K562 (cell line): ENCODE measurements at regions of chr2 and their contacts with region 1.

Region 1: DNA sequence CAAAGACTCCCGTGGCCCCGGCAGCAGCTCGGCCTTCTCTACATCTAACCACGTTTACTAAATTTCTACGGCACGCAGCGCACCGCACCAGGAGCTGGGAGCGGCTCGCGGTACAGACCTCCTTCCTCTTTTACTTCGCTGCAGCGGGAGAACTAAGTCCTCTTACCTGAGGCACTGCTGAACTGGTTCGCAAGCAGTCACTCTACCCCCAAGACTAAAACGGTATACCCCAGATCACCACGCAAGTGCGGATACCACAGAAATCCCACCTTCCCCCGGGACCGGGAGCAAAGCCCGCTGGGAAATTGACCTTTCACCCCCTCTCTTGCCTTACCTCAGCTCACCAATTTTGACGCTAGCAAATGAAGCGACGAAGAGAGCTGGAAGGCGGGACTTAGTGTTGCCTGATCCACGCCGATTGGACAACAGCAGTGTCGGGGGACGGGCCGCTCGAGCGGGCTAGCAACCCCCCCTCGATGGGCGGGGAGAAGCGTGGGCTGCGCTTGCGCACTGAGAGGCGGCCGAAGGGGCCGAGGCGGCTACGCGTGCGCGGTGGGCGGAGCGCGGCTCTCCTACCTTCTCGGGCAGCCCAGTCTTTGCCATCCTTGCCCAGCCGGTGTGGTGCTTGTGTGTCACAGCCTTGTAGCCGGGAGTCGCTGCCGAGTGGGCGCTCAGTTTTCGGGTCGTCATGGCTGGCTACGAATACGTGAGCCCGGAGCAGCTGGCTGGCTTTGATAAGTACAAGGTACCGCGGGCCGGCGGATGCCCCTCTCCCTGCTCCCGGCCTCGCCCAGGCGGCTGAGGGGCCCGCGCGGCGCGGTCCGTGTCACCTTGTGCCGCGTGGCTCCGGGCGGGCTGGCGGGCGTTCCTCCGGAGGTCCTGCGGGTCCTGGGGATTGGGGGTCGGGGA is at the start of gene SELENOI:
- DNase-seq: peak; percentile 98 to 99 (median 99)
- ATAC-seq: peak; percentile 89
- H3K4me3 ChIP-seq: peak within 1 kb of the TSS; percentile 86
- H3K27ac ChIP-seq: peak within 1 kb of the TSS; percentile 97
- H3K4me1 ChIP-seq: peaks cover 18 to 19% of the 10 kb centered on the region in 2 experiments
- H3K27me3 ChIP-seq: no peaks in the 10 kb centered on the region
- CTCF ChIP-seq: no peak
- EP300 ChIP-seq: peak; percentile 35; the same call in 1 of the 2 replicates
- POLR2A ChIP-seq: peak; percentile 99
- RAD21 ChIP-seq: no peak; a peak in 1 of 4 replicates
- polyA plus RNA-seq, gene SELENOI: 9.6 to 10.6 TPM

Region 2: DNA sequence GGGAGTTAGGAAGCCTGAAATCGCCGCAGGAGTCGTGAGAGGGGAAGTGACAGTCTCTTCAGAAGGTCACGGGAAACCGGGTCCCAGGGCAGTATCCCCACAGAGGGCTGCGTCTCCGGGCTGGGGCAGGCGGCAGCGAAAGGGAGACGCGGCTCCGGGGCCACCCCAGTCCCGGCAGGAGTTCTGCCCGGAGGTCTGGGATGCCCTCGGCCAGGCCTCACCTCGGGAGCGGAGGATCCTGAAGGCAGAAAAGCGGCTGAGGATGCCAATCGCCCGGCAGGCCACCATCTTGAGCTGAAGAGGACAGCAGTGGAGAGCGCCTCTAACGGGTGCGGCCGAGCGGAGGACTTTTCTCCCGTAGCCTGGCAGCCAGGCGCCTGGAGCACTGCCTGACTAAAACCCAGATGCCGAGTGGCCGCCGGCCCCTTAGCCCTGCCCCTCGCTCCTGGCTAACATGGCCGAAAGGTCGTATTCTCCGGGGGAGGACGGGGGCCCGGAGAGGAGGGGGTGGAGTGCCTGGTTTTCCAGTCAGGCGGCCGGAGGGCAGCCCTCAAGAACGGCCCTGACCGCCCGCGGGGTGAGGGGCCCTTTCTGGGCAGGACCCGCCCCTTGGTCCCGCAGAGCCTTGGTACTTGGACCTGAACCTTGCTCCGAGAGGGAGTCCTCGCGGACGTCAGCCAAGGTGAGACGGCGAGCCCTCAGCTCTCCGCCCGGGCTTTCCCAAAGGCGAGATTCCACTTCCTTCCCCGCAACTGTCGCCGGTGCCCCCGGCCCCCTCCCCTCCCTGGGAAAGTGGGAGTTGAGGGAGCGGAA is 101.3 kb before region 1 on chr2 and contains the starts of genes HADHA and HADHB:
- CTCF ChIA-PET with region 1: no interaction called
- POLR2A ChIA-PET with region 1: interaction called, 5 read pairs
- in situ Hi-C with region 1: no loop called
- intact Hi-C with region 1: loop called (anchors 5 kb)
- DNase-seq: peak; percentile 90 to 93 (median 91)
- ATAC-seq: peak; percentile 85
- H3K4me3 ChIP-seq: peak within 1 kb of the TSS; percentile 82
- H3K27ac ChIP-seq: peak within 1 kb of the TSS; percentile 95
- H3K4me1 ChIP-seq: peaks cover 9 to 16% of the 10 kb centered on the region in 2 experiments; a peak in 3 of 5 replicates
- H3K27me3 ChIP-seq: no peaks in the 10 kb centered on the region
- CTCF ChIP-seq: peak; percentile 13 to 18 (median 14); a peak in 2 of 6 replicates
- EP300 ChIP-seq: peak; percentile 47
- POLR2A ChIP-seq: peak; percentile 91
- RAD21 ChIP-seq: 0 out of 4 replicates have a peak, but pooled peaks of 1 of the 2 experiments have one; percentile 4
- polyA plus RNA-seq, gene HADHA: 152 to 326 TPM
- polyA plus RNA-seq, gene HADHB: 198 to 199 TPM

Region 3: GRCh38 chr2:26335231-26335630 is 10.6 kb before region 1 on chr2:
- CTCF ChIA-PET with region 1: no interaction called
- POLR2A ChIA-PET with region 1: interaction called, 11 read pairs
- in situ Hi-C with region 1: no loop called
- intact Hi-C with region 1: no loop called
- DNase-seq: no peak
- ATAC-seq: no peak
- H3K4me3 ChIP-seq: no peak overlapping the region
- H3K27ac ChIP-seq: no peak overlapping the region
- H3K4me1 ChIP-seq: peaks cover 2 to 23% of the 10 kb centered on the region in 2 experiments; a peak in 4 of 5 replicates
- H3K27me3 ChIP-seq: no peaks in the 10 kb centered on the region
- CTCF ChIP-seq: no peak
- EP300 ChIP-seq: no peak
- POLR2A ChIP-seq: no peak
- RAD21 ChIP-seq: no peak

Region 4: DNA sequence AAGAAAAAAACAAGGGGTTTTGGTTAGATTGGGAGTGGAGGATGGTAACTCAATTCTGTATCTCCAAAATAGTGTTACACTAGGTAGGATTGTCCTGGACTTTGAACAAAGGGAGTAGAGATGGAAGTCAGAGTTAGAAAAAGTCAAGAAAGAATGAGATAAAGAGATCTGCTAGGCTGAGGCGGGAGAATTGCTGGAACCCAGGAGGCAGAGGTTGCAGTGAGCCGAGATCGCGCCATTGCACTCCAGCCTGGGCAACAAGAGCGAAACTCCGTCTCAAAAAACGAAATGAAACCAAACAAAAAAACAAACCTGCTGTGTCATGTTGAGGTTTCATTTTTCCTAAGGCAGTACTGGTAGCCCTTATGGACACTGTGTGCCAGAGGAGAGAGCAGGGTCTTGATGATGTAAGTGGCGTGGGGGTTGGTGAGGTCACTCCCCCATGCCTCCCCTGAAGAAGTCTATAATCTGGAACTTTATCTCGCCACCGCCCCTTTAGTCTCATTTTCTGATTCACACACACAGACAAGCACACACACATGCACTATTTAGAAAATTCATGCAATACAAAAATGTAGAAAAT is 66.4 kb after region 1 on chr2:
- CTCF ChIA-PET with region 1: no interaction called
- POLR2A ChIA-PET with region 1: no interaction called
- in situ Hi-C with region 1: no loop called
- intact Hi-C with region 1: loop called (anchors 5 kb)
- DNase-seq: peak; percentile 79 to 92 (median 85)
- ATAC-seq: peak; percentile 94
- H3K4me3 ChIP-seq: peak overlapping the region; percentile 30
- H3K27ac ChIP-seq: peak overlapping the region; percentile 95
- H3K4me1 ChIP-seq: peaks cover 7 to 18% of the 10 kb centered on the region in 2 experiments; a peak in 4 of 5 replicates
- H3K27me3 ChIP-seq: no peaks in the 10 kb centered on the region
- CTCF ChIP-seq: peak in 1 of 3 experiments; percentile 6; a peak in 1 of 6 replicates
- EP300 ChIP-seq: peak; percentile 83
- POLR2A ChIP-seq: peak; percentile 87
- RAD21 ChIP-seq: no peak; a peak in 1 of 4 replicates

Region 5: DNA sequence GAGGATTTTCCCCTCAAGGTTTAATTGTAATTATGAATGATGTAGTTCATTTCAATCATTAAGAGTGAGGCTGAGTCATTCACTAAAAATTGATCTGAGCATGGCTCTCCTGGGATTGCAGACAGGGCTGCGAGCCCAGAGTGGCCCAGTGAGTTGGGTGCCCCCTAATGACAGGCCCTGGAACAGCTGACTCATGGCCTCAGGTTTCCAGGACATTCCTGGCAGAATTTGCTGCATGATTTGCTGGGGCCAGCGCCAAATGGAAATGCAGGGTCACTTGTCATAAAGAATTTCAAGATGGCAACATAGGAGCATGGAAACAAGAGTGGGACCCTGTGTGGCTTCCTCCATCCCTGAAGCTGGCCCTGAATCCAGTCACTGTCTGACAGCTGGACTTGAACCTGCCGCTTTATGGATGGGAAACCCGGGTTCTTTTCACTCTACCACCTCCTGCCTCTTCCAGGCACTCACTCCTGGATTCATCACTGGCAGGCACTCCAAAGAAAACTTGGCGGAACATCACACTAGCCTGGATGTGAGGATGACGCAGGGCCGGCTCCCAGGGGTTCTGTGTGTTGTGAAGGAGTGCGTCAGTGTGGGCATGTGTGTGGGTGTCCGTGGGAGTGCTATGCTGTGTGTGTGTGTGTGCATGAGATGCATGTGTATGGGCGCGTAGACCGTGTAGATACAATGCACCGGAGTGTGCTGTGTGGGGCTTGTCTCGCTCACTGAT is 116.9 kb after region 1 on chr2:
- CTCF ChIA-PET with region 1: no interaction called
- POLR2A ChIA-PET with region 1: interaction called, 9 read pairs
- in situ Hi-C with region 1: no loop called
- intact Hi-C with region 1: loop called (anchors 5 kb)
- DNase-seq: peak; percentile 71 to 74 (median 72)
- ATAC-seq: peak; percentile 81
- H3K4me3 ChIP-seq: no peak overlapping the region
- H3K27ac ChIP-seq: no peak overlapping the region
- H3K4me1 ChIP-seq: peaks cover 13 to 38% of the 10 kb centered on the region in 2 experiments; a peak in 4 of 5 replicates
- H3K27me3 ChIP-seq: no peaks in the 10 kb centered on the region
- CTCF ChIP-seq: peak; percentile 83 to 91 (median 90)
- EP300 ChIP-seq: no peak
- POLR2A ChIP-seq: no peak
- RAD21 ChIP-seq: peak; percentile 58 to 80; a peak in 3 of 4 replicates